HepG2 (cell line): ENCODE measurements at regions of chr13 and their contacts with region 1.

Region 1: GRCh38 chr13:32031025-32031814 is at the start of gene FRY:
- DNase-seq: peak; percentile 74
- ATAC-seq: peak; percentile 94
- H3K4me3 ChIP-seq: peak within 1 kb of the TSS; percentile 65 to 88 (median 83)
- H3K27ac ChIP-seq: peak within 1 kb of the TSS; percentile 80
- H3K4me1 ChIP-seq: peaks cover 65% of the 10 kb centered on the region
- H3K27me3 ChIP-seq: no peaks in the 10 kb centered on the region; a peak in 1 of 5 replicates
- CTCF ChIP-seq: peak; percentile 60
- EP300 ChIP-seq: peak in 1 of 2 experiments; percentile 10; a peak in 1 of 4 replicates
- POLR2A ChIP-seq: peak; percentile 15 to 47; a peak in 2 of 4 replicates
- RAD21 ChIP-seq: peak; percentile 30; the same call in 1 of the 2 replicates
- total RNA-seq, gene FRY: 8.2 and 14.8 TPM in 2 replicates

Region 2: GRCh38 chr13:32059511-32059984 is 28.3 kb after region 1 on chr13:
- CTCF ChIA-PET with region 1: no interaction called
- POLR2A ChIA-PET with region 1: no interaction called
- in situ Hi-C with region 1: no loop called
- intact Hi-C with region 1: loop called (anchors 1 kb)
- DNase-seq: peak; percentile 98
- ATAC-seq: peak; percentile 98
- H3K4me3 ChIP-seq: no peak overlapping the region; a peak in 1 of 6 replicates
- H3K27ac ChIP-seq: peak overlapping the region; percentile 90
- H3K4me1 ChIP-seq: peaks cover 80% of the 10 kb centered on the region
- H3K27me3 ChIP-seq: no peaks in the 10 kb centered on the region
- CTCF ChIP-seq: no peak
- EP300 ChIP-seq: peak; percentile 43 to 86; a peak in 3 of 4 replicates
- POLR2A ChIP-seq: 0 out of 4 replicates have a peak, but pooled peaks of 1 of the 2 experiments have one; percentile 30
- RAD21 ChIP-seq: no peak

Region 3: DNA sequence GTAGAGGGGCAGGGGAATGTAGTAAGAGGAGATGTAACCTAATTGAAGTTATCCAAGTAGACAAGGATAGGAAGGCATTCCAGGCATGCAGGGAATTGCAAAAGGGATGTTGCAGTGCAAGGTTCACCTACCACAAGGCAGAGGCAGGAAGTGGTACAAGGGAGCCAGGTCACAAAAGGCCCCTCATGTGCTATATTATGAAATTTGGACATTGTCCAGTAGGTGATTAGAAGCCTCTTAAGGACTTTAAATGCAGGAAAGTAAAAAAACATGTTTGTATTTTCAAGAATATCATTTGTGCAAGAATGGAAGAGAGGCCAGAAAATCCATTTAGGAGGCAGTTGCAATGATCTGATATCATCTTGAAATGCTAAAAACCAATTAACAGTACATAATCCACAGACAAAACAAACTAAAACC is 111.7 kb after region 1 on chr13:
- CTCF ChIA-PET with region 1: no interaction called
- POLR2A ChIA-PET with region 1: no interaction called
- in situ Hi-C with region 1: loop called (anchors 25 kb)
- intact Hi-C with region 1: loop called (anchors 1 kb)
- DNase-seq: peak; percentile 98
- ATAC-seq: peak; percentile 98
- H3K4me3 ChIP-seq: no peak overlapping the region; a peak in 1 of 6 replicates
- H3K27ac ChIP-seq: peak overlapping the region; percentile 77
- H3K4me1 ChIP-seq: peaks cover 69% of the 10 kb centered on the region
- H3K27me3 ChIP-seq: no peaks in the 10 kb centered on the region
- CTCF ChIP-seq: no peak
- EP300 ChIP-seq: peak; percentile 92 to 97
- POLR2A ChIP-seq: no peak
- RAD21 ChIP-seq: peak; percentile 28; the same call in 1 of the 2 replicates

Region 4: DNA sequence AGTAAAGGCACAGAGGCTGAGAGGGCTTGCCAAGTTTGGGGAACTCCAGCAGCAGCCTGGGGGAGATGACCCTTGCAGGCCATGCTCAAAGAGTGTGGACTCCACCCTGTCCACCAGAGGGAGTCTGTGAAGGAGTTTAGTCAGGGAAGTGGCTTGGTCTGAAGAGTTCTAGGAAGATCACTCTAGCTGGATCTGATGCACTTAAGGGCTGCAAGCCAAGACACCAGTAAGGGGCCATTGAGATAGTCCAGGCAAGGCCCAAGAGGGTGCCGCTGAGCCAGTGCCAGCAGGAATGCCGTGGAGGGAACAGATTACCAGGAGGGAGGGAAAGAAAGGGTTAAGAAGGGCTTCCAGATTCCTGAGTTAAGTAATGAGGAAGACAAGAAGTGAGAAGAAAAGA is 215.2 kb after region 1 on chr13:
- CTCF ChIA-PET with region 1: no interaction called
- POLR2A ChIA-PET with region 1: no interaction called
- in situ Hi-C with region 1: no loop called
- intact Hi-C with region 1: loop called (anchors 5 kb)
- DNase-seq: peak; percentile 67
- ATAC-seq: peak; percentile 95
- H3K4me3 ChIP-seq: no peak overlapping the region
- H3K27ac ChIP-seq: no peak overlapping the region
- H3K4me1 ChIP-seq: peaks cover 62% of the 10 kb centered on the region
- H3K27me3 ChIP-seq: no peaks in the 10 kb centered on the region
- CTCF ChIP-seq: peak; percentile 87
- EP300 ChIP-seq: no peak
- POLR2A ChIP-seq: no peak
- RAD21 ChIP-seq: peak; percentile 75